ENCODE measurements at regions of chr1 and their contacts with region 1.

Region 1: GRCh38 chr1:181424786-181425403 is 58.4 kb upstream of the CACNA1E start:
- DNase-seq: peak; percentile 82
- ATAC-seq: peak; percentile 67
- H3K4me3 ChIP-seq: no peak overlapping the region
- H3K27ac ChIP-seq: no peak overlapping the region
- H3K4me1 ChIP-seq: no peaks in the 10 kb centered on the region
- H3K27me3 ChIP-seq: 0 out of 2 replicates have a peak, but pooled peaks cover 7% of the 10 kb centered on the region
- CTCF ChIP-seq: peak; percentile 97

Region 2: GRCh38 chr1:181189691-181190363 is 235.1 kb before region 1 on chr1:
- CTCF ChIA-PET with region 1: interaction called, 5 read pairs
- POLR2A ChIA-PET with region 1: no interaction called
- intact Hi-C with region 1: loop called (anchors 1 kb)
- DNase-seq: peak; percentile 62
- ATAC-seq: peak; percentile 96
- H3K4me3 ChIP-seq: peak overlapping the region; percentile 27; the same call in 1 of the 2 replicates
- H3K27ac ChIP-seq: no peak overlapping the region
- H3K4me1 ChIP-seq: no peaks in the 10 kb centered on the region
- H3K27me3 ChIP-seq: no peaks in the 10 kb centered on the region
- CTCF ChIP-seq: peak; percentile 87

Region 3: DNA sequence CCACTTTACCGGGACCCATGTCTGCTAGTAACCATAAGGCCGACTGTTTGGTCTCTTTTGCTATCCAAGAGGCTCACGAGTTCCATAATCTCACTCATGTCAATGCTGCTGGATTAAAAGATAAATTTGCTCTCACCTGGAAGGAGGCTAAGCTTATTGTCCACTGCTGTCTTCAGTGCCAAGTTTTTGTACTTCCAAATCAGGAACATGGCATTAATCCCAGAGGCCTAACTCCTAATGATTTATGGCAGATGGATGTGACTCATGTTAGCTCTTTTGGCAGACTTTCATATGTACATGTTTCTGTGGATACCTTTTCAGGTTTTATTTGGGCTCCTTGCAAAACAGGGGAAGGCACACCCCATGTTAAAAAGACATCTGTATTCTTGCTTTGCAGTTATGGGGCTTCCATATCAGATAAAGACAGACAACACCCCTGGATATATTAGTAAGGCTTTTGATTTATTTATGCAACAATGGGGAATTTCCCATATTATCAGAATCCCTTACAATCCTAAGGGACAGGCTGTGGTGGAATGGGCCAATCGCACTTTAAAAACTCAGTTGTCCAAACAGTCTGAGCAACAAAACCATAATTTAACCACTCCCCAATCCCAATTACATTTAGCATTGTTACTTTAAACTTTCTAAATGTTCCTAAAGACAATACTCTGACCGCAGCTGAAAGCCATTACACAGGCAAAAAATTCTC is 173.7 kb before region 1 on chr1:
- CTCF ChIA-PET with region 1: no interaction called
- POLR2A ChIA-PET with region 1: no interaction called
- intact Hi-C with region 1: loop called (anchors 5 kb)
- DNase-seq: peak; percentile 92
- ATAC-seq: peak; percentile 62
- H3K4me3 ChIP-seq: no peak overlapping the region
- H3K27ac ChIP-seq: peak overlapping the region; percentile 32; the same call in 1 of the 2 replicates
- H3K4me1 ChIP-seq: peaks cover 22% of the 10 kb centered on the region
- H3K27me3 ChIP-seq: no peaks in the 10 kb centered on the region
- CTCF ChIP-seq: no peak

Measured in PC-3 (cell line).